ENCODE measurements at regions of chr2 and their contacts with region 1.

Region 1: GRCh38 chr2:224357098-224357901 is 44.6 kb downstream of the FAM124B start:
- DNase-seq: peak; percentile 88
- H3K4me3 Mint-ChIP-seq: no peak overlapping the region
- H3K27ac Mint-ChIP-seq: no peak overlapping the region
- H3K4me1 Mint-ChIP-seq: no peaks in the 10 kb centered on the region
- H3K27me3 Mint-ChIP-seq: peaks cover 7% of the 10 kb centered on the region

Region 2: DNA sequence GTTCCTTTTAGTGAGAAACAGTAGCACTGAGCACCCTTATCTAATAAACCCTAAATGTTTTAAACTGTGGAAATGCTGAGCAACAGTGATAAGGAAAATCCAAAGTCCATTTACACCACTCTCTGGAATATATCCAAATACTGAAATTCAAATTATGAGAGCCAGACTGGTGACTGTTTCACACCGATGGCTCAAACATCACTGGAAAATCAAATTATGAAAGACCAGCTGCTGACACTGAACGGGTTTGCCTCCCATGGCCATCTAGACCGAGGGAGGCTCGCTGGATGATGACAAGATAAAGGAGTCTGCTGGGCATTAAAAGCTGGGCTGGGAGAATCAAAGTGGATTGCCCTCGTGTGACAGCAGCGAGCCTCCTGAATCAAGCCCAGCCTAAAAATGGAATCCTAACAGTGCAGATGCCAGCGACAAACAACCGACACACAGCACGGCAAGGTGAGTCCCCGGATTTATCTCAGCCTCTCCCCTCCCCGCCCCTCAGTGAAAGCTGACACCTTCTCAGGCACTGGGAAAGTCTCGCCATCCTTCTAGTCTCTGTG is 348.5 kb before region 1 on chr2:
- intact Hi-C with region 1: no loop called
- DNase-seq: no peak
- H3K4me3 Mint-ChIP-seq: no peak overlapping the region
- H3K27ac Mint-ChIP-seq: no peak overlapping the region
- H3K4me1 Mint-ChIP-seq: peaks cover 10% of the 10 kb centered on the region
- H3K27me3 Mint-ChIP-seq: no peaks in the 10 kb centered on the region

Region 3: GRCh38 chr2:224449212-224450147 is 92.2 kb after region 1 on chr2:
- intact Hi-C with region 1: loop called (anchors 1 kb)
- DNase-seq: peak; percentile 66
- H3K4me3 Mint-ChIP-seq: no peak overlapping the region
- H3K27ac Mint-ChIP-seq: no peak overlapping the region
- H3K4me1 Mint-ChIP-seq: no peaks in the 10 kb centered on the region
- H3K27me3 Mint-ChIP-seq: peaks cover 21% of the 10 kb centered on the region

Region 4: GRCh38 chr2:224650815-224651439 is 293.6 kb after region 1 on chr2:
- intact Hi-C with region 1: loop called (anchors 1 kb)
- DNase-seq: peak; percentile 77
- H3K4me3 Mint-ChIP-seq: no peak overlapping the region
- H3K27ac Mint-ChIP-seq: no peak overlapping the region
- H3K4me1 Mint-ChIP-seq: no peaks in the 10 kb centered on the region
- H3K27me3 Mint-ChIP-seq: peaks cover 3% of the 10 kb centered on the region

Region 5: GRCh38 chr2:224778474-224778877 is 421.2 kb after region 1 on chr2:
- intact Hi-C with region 1: loop called (anchors 1 kb)
- DNase-seq: peak; percentile 87
- H3K4me3 Mint-ChIP-seq: no peak overlapping the region
- H3K27ac Mint-ChIP-seq: no peak overlapping the region
- H3K4me1 Mint-ChIP-seq: peaks cover 5% of the 10 kb centered on the region
- H3K27me3 Mint-ChIP-seq: no peaks in the 10 kb centered on the region

Region 6: GRCh38 chr2:225002039-225002655 is 644.8 kb after region 1 on chr2:
- intact Hi-C with region 1: loop called (anchors 5 kb)
- DNase-seq: peak; percentile 89
- H3K4me3 Mint-ChIP-seq: peak overlapping the region; percentile 63
- H3K27ac Mint-ChIP-seq: peak overlapping the region; percentile 73
- H3K4me1 Mint-ChIP-seq: peaks cover 65% of the 10 kb centered on the region
- H3K27me3 Mint-ChIP-seq: no peaks in the 10 kb centered on the region

Region 7: GRCh38 chr2:225660262-225661131 is 1303.2 kb after region 1 on chr2:
- intact Hi-C with region 1: loop called (anchors 10 kb)
- DNase-seq: peak; percentile 90
- H3K4me3 Mint-ChIP-seq: no peak overlapping the region
- H3K27ac Mint-ChIP-seq: no peak overlapping the region
- H3K4me1 Mint-ChIP-seq: no peaks in the 10 kb centered on the region
- H3K27me3 Mint-ChIP-seq: peaks cover 19% of the 10 kb centered on the region